ENCODE measurements at regions of chr11 and their contacts with region 1.

Region 1: DNA sequence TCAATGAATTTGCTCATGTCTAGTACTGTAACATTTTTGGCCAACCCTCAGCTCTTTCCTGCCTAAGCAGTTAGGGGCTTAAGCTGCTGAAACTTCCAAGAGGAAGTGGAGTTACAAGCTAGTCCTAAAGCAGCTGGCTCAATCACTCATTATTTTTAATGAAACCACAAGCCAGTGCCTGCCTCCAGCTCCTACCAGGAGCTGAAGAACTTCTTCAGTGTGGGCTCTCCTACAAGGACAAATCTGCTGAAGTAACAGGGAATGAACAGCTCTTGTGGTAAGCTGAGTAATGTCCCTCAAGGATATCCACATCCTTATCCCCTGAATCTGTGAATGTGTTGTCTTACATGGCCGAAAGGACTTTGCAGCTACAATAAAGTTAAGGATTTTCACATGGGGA is 112.5 kb downstream of the BBOX1 start:
- DNase-seq: no peak
- H3K27ac ChIP-seq: no peak overlapping the region
- CTCF ChIP-seq: no peak

Region 2: GRCh38 chr11:26778000-26778757 is 375.0 kb before region 1 on chr11:
- CTCF ChIA-PET with region 1: no interaction called
- POLR2A ChIA-PET with region 1: no interaction called
- DNase-seq: peak; percentile 41
- H3K27ac ChIP-seq: no peak overlapping the region
- CTCF ChIP-seq: no peak

Region 3: DNA sequence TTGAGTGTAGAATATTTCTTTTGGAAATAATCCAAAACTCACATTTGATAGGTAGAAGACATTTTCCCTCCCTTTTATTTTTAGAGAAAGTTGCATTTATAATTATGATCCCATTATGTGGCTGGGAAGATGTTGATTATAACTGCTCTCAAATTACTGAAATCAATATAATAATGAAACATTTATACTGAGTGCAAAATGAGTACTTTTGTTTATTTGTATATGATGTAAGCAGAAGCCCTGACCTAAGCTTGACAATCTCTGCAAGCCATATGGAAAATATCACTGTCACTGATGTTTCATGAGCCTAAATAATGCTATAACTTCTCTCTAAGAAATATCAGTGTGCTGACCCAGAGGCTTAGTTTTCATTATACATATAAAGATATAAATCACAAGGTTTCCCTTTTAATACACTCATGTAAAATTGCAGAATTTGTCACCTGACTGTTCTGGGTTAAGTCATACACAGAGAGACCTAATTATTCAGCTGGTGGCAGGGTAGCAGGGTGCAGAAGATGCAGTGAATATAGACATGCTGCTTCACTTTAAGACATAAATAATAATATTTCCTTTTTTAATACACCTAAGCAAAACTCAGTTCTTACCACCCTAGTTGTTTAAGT is 13.3 kb before region 1 on chr11:
- CTCF ChIA-PET with region 1: interaction called, 10 read pairs
- POLR2A ChIA-PET with region 1: no interaction called
- DNase-seq: no peak
- H3K27ac ChIP-seq: no peak overlapping the region
- CTCF ChIP-seq: no peak

Region 4: GRCh38 chr11:27184458-27185312 is 31.5 kb after region 1 on chr11:
- CTCF ChIA-PET with region 1: no interaction called
- POLR2A ChIA-PET with region 1: no interaction called
- DNase-seq: peak; percentile 20
- H3K27ac ChIP-seq: no peak overlapping the region
- CTCF ChIP-seq: no peak

Region 5: DNA sequence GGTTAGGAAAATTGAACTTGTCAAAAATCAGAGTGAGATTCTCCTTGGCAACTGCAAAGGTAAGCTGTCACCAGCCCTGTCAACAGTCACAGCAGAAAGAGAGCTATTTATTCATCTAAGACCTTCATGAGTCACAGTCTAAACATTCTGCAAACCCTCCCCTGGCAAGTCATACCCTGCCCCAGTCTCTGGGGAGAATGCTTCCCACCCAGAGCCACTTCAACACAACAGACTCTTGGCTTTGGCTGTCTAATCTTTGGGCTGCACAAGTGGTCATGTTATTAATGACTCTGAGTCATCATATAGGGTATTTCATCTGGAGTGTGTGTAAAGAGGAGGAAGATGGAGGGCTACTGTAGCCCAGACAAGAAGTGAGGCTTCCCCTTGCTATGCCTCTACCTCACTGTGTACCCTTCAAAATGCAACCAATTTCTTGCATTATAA is 56.4 kb after region 1 on chr11:
- CTCF ChIA-PET with region 1: no interaction called
- POLR2A ChIA-PET with region 1: no interaction called
- DNase-seq: peak; percentile 87
- H3K27ac ChIP-seq: peak overlapping the region; percentile 91
- CTCF ChIP-seq: no peak

Region 6: DNA sequence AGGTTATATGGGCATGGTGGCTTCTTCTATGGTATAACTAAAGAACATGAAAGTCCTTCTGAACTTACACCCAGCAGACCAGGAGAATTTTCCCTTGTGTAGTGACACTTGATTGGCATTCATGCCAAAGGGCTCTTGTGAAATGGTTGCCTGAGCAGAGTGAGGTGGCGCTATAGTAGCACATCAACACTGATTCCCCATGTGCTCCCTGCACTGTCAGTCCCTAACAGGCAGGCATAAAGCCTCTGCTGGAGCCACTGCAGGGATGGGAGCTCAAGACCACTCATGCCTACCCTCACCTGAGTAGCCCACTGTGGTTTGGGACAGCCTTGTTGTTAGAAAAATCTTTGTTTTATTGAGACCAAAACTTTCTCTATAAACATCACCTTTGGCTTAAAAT is 446.1 kb after region 1 on chr11:
- CTCF ChIA-PET with region 1: no interaction called
- POLR2A ChIA-PET with region 1: no interaction called
- DNase-seq: no peak
- H3K27ac ChIP-seq: no peak overlapping the region
- CTCF ChIP-seq: no peak

Measured in RWPE1 (cell line).